Posterior vena cava (tissue), 2 donors: ENCODE measurements at regions of chr13 and their contacts with region 1.

Region 1: GRCh38 chr13:98476538-98476966 is 100.4 kb downstream of the STK24 start:
- DNase-seq: no peak

Region 2: DNA sequence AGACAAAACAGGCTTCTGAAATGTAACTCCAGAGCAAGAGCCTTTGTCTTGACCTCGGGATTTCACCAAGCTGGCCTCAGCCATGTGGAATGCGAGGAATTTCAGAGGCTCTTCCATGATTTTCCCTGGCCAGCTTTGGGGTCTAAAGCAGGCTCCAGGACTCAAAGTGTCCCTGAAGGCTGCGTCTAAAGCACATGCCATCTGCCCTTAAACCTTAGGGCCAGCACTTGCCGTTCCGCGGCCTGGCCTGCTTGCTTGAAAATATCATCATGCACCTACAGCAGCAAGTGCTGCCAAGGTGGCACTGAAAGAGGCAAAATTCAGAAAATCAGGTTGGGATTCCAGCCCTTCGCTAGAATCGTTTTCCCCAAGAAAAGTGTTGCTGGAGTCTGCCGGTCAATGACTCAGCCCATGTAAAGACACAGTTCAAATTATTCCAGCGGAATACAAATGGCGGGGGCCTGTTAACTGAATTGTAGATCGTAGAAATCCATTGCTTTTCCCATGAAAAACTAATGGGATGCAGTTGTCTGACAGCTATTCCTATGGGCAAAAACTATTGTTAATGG is 1148.2 kb before region 1 on chr13:
- intact Hi-C with region 1: no loop called
- DNase-seq: no peak

Region 3: DNA sequence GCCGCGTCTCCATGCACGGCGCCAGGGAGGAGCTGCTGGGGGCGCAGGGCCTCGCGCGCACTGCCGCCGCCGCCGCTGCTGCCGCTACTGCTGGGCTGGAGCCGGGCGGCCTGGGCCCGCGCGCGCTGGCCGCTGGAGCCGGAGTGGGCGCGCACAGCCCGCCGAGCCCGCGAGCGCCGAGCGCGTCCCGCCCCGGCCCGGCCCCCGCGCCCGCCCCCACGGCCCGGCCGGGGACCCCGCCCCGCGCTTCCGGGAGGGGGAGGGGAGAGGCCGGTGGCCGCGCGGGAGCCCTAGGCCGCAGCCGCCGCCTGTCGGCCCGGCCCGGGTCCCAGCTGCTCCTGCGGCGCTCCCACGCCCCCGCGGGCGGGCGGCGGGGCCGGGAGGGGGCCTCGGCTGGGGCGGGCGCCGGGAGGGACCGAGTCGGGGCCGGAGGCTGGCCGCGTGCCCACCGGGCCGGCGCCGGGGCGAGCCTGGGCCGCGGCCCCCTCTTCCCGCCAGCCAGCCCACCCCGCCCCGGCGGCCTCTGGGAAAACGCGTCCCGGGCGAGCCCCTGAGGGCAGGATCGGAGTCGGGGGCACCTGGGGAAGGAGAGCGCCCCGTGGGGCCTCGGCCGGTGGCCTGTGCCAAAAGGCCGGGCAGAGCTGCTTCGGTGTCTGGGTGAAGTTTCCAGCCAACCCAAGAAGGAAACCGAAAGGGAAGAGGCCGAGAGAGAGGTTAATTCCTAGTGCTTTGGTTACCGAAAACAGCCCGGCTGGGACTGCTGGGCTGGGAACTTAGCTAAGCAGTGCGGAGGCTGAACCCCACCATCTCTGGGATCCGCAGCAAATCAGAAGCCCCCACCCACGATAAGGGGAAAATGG is 100.6 kb after region 1 on chr13 and contains the start of gene STK24:
- intact Hi-C with region 1: loop called in 1 of 2 experiments (anchors 10 kb)
- DNase-seq: peak; percentile 91
- total RNA-seq, gene STK24: 57.3 to 62.6 TPM